ENCODE measurements at regions of chr21 and their contacts with region 1.

Region 1: GRCh38 chr21:44024887-44025362 is 12.8 kb downstream of the TRAPPC10 start:
- DNase-seq: peak; percentile 50 to 76 (median 70)
- ATAC-seq: peak; percentile 64 to 87 (median 76)
- H3K4me3 ChIP-seq: peak overlapping the region in 1 of 12 donors; percentile 4
- H3K27ac ChIP-seq: peak overlapping the region in 10 of 12 donors; percentile 16 to 76 (median 42)
- H3K4me1 ChIP-seq: peaks cover 0 to 62% (median 42%) of the 10 kb centered on the region in 12 donors
- H3K27me3 ChIP-seq: no peaks in the 10 kb centered on the region
- CTCF ChIP-seq: no peak
- POLR2A ChIP-seq: no peak

Region 2: GRCh38 chr21:44051462-44051941 is 26.6 kb after region 1 on chr21:
- intact Hi-C with region 1: loop called in 1 of 10 experiments (anchors 2 kb)
- DNase-seq: peak; percentile 32 to 79 (median 70)
- ATAC-seq: peak; percentile 20 to 86 (median 74)
- H3K4me3 ChIP-seq: peak overlapping the region in 1 of 12 donors; percentile 5
- H3K27ac ChIP-seq: peak overlapping the region; percentile 12 to 85 (median 50)
- H3K4me1 ChIP-seq: peaks cover 0 to 42% (median 26%) of the 10 kb centered on the region in 12 donors
- H3K27me3 ChIP-seq: no peaks in the 10 kb centered on the region
- CTCF ChIP-seq: no peak
- POLR2A ChIP-seq: no peak

Region 3: GRCh38 chr21:44078411-44078981 is 53.6 kb after region 1 on chr21:
- intact Hi-C with region 1: loop called in 1 of 10 experiments (anchors 5 kb)
- DNase-seq: no peak
- ATAC-seq: no peak
- H3K4me3 ChIP-seq: no peak overlapping the region
- H3K27ac ChIP-seq: no peak overlapping the region
- H3K4me1 ChIP-seq: peaks cover 0 to 15% (median 11%) of the 10 kb centered on the region in 12 donors
- H3K27me3 ChIP-seq: no peaks in the 10 kb centered on the region
- CTCF ChIP-seq: no peak
- POLR2A ChIP-seq: no peak